HAP-1 (cell line): ENCODE measurements at regions of chr4 and their contacts with region 1.

Region 1: DNA sequence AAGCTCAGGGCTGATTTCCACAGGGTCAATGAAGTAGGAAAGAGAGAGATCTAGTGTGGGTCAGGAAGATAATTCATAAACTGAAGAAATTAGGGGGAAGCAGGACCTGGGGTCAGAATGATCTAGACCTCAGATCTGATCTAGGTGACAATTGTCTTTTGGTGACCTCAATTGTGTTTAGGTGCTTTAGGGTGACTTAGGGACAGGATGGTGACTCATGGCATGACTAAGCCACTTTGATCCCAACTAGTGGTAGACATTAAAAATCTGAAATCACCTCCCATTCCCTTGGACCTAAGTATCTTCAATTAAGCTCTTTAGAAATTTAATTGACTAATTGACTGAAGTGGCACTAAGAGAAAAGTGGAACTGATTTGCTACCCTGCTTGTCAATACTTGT is 36.7 kb upstream of the GRXCR1 start:
- DNase-seq: no peak
- H3K4me3 ChIP-seq: no peak overlapping the region
- H3K4me1 ChIP-seq: no peaks in the 10 kb centered on the region
- H3K27me3 ChIP-seq: no peaks in the 10 kb centered on the region

Region 2: GRCh38 chr4:42568610-42569207 is 287.1 kb before region 1 on chr4:
- in situ Hi-C with region 1: loop called (anchors 10 kb)
- DNase-seq: peak; percentile 79
- H3K4me3 ChIP-seq: no peak overlapping the region
- H3K4me1 ChIP-seq: no peaks in the 10 kb centered on the region
- H3K27me3 ChIP-seq: no peaks in the 10 kb centered on the region

Region 3: GRCh38 chr4:43089730-43090129 is 234.0 kb after region 1 on chr4:
- in situ Hi-C with region 1: no loop called
- DNase-seq: no peak
- H3K4me3 ChIP-seq: no peak overlapping the region
- H3K4me1 ChIP-seq: no peaks in the 10 kb centered on the region
- H3K27me3 ChIP-seq: no peaks in the 10 kb centered on the region

Region 4: GRCh38 chr4:43525646-43526045 is 669.9 kb after region 1 on chr4:
- in situ Hi-C with region 1: no loop called
- DNase-seq: no peak
- H3K4me3 ChIP-seq: no peak overlapping the region
- H3K4me1 ChIP-seq: no peaks in the 10 kb centered on the region
- H3K27me3 ChIP-seq: no peaks in the 10 kb centered on the region